Activated naive CD4-positive, alpha-beta T cell treated with anti-CD3 and anti-CD28 coated beads for 36 hours (primary cell): ENCODE measurements at regions of chr7 and their contacts with region 1.

Region 1: GRCh38 chr7:14457568-14458453 is 444.7 kb downstream of the DGKB start:
- DNase-seq: peak; percentile 56
- H3K4me3 Mint-ChIP-seq: no peak overlapping the region
- H3K27ac Mint-ChIP-seq: no peak overlapping the region
- H3K4me1 Mint-ChIP-seq: no peaks in the 10 kb centered on the region
- H3K27me3 Mint-ChIP-seq: no peaks in the 10 kb centered on the region

Region 2: DNA sequence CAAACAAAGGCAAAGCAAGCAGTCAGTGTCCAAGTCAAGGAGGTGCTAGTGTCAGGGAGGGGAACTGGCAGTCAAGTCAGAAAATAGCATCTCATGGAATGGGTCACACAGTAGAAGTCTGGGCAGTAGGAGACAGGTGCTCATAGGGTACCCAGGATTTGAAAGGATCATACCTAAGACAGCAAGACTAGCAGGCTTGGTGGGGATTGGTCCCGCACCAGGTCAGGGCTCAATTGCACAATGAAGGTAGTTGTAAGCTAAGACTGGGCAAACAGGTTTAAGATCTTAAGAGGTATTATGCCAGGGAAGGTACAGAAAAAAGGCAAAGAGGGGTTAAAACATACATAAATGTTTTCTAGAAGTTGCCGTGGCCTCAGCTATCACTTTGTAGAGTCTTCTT is 286.9 kb before region 1 on chr7:
- CTCF ChIA-PET with region 1: no interaction called
- intact Hi-C with region 1: no loop called
- DNase-seq: no peak
- H3K4me3 Mint-ChIP-seq: no peak overlapping the region
- H3K27ac Mint-ChIP-seq: no peak overlapping the region
- H3K4me1 Mint-ChIP-seq: no peaks in the 10 kb centered on the region
- H3K27me3 Mint-ChIP-seq: no peaks in the 10 kb centered on the region

Region 3: GRCh38 chr7:14332155-14332554 is 125.7 kb before region 1 on chr7:
- CTCF ChIA-PET with region 1: no interaction called
- intact Hi-C with region 1: no loop called
- DNase-seq: no peak
- H3K4me3 Mint-ChIP-seq: no peak overlapping the region
- H3K27ac Mint-ChIP-seq: no peak overlapping the region
- H3K4me1 Mint-ChIP-seq: no peaks in the 10 kb centered on the region
- H3K27me3 Mint-ChIP-seq: no peaks in the 10 kb centered on the region

Region 4: DNA sequence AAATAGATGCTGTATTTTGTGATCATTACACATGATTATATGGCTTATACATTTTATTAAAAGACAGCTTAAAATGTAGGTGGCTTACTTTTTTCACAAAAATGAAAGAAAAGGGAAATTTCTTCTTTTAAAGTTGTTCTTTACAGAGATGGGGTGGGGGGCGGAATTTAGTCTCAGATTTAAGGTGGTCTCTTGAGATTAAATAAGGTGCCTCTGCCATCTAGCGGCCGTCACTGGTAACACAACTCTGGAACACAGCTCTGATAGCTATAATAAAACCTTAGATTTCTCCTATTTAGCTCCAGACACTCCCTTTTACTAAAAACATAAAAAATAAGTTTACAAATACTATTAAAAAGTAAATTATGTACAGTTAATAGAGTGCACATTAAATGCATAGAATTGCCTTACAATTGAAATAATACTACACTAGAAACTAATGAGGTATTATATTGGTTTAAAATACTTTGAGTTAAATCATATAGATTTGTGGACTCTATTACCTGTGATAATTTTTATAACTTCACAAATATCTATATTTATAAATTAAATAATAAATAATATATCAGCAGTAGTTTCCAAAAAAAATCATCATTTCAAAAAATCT is 233.9 kb after region 1 on chr7:
- CTCF ChIA-PET with region 1: no interaction called
- intact Hi-C with region 1: loop called (anchors 10 kb)
- DNase-seq: peak; percentile 59
- H3K4me3 Mint-ChIP-seq: no peak overlapping the region
- H3K27ac Mint-ChIP-seq: no peak overlapping the region
- H3K4me1 Mint-ChIP-seq: no peaks in the 10 kb centered on the region
- H3K27me3 Mint-ChIP-seq: no peaks in the 10 kb centered on the region